ENCODE measurements at regions of chr3 and their contacts with region 1.

Region 1: DNA sequence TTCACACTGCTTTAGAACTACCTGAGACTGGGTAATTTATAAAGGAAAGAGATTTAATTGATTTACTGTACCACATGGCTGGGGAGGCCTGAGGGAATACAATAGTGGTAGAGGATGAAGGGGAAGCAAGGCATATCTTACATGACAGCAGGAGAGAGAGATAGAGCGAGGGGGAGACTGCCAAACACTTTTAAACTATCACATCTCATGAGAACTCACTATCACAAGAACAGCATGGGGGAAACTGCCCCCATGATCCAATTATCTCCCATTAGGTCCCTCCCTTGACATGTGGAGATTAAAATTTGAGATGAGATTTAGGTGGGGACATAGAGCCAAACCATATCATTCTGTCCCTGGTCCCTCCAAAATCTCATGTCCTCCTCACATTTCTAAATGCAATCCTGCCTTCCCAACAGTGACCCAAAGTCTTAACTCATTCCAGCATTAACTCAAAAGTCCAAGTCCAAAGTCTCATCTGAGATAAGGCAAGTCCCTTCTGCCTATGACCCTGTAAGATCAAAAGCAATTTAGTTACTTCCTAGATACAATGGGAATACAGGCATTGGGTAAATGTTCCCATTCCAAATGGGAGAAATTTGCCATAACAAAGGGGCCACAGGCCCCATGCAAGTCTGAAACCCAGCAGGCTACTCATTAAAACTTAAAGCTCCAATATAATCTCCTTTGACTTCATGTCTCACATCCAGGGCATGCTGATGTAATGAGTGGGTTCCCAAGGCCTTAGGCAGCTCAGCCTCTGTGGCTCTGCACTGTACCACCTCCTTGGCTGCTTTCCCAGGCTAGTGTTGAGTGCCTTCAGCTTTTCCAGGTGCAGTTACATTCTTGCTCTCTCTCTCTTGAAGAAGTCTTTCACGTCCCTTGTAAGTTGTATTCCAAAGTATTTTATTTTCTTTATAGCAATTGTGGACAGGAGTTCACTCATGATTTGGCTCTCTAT is 481.7 kb upstream of the TGFBR2 start:
- DNase-seq: no peak
- ATAC-seq: no peak
- H3K4me3 ChIP-seq: no peak overlapping the region
- H3K4me3 Mint-ChIP-seq: no peak overlapping the region
- H3K27ac ChIP-seq: no peak overlapping the region
- H3K27ac Mint-ChIP-seq: no peak overlapping the region
- H3K4me1 ChIP-seq: no peaks in the 10 kb centered on the region
- H3K4me1 Mint-ChIP-seq: no peaks in the 10 kb centered on the region
- H3K27me3 ChIP-seq: no peaks in the 10 kb centered on the region
- H3K27me3 Mint-ChIP-seq: peaks cover 0 to 1% (median 0%) of the 10 kb centered on the region in 5 donors

Region 2: GRCh38 chr3:30141178-30141581 is 16.5 kb after region 1 on chr3:
- CTCF ChIA-PET with region 1: no interaction called
- POLR2A ChIA-PET with region 1: no interaction called
- intact Hi-C with region 1: loop called in 1 of 2 experiments (anchors 1 kb)
- DNase-seq: no peak
- ATAC-seq: no peak
- H3K4me3 ChIP-seq: no peak overlapping the region
- H3K4me3 Mint-ChIP-seq: no peak overlapping the region
- H3K27ac ChIP-seq: no peak overlapping the region
- H3K27ac Mint-ChIP-seq: no peak overlapping the region
- H3K4me1 ChIP-seq: no peaks in the 10 kb centered on the region
- H3K4me1 Mint-ChIP-seq: no peaks in the 10 kb centered on the region
- H3K27me3 ChIP-seq: no peaks in the 10 kb centered on the region
- H3K27me3 Mint-ChIP-seq: peaks cover 0 to 2% (median 0%) of the 10 kb centered on the region in 5 donors